ENCODE measurements at regions of chr13 and their contacts with region 1.

Region 1: DNA sequence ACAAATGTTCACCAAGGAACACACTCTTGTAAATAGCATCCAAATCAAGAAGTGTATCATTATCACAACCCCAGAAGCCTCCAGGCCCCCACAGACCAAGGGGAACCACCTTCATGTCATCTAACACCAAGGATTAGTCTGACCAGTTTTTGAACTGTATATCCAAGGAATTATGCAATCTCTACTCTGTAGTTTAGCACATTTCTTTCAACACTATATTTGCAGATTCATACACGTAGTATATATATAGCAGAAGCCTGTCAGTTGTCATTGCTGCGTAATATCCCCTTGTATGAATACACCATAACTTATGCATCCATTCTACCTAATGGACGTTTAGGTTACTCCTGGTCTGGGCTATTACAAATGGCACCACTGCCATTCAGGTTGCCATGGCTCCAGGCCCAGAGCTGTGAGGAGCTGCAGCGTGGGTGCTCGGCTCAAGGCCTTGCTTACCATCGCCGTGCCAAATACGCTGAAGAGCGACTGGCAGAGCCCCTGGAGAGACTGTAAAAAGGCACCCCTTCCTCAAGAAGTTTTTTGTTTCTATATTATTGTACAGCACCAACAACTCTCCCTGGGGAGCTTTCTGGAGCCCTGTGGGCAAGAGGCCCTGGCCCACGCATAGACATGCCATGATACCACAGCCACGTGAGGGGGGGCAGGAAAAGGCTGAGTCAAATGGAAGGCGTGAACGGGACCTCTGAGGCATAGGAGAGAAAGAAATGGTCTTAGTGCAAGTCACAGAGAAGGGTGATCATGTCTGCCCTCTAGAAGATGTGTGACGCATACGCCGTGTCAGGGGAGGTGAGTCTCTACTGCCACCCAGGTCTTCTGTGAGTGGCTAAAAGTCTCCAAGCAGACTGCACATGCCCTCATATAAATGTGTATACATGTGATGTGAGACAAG is 10.8 kb downstream of the LATS2 start:
- DNase-seq: no peak
- ATAC-seq: peak in 2 of 4 donors; percentile 31 to 33
- H3K4me3 ChIP-seq: no peak overlapping the region
- H3K27ac ChIP-seq: peak overlapping the region; percentile 81
- H3K4me1 ChIP-seq: peaks cover 71% of the 10 kb centered on the region
- H3K27me3 ChIP-seq: no peaks in the 10 kb centered on the region
- CTCF ChIP-seq: no peak

Region 2: GRCh38 chr13:20924758-20925394 is 125.7 kb before region 1 on chr13:
- intact Hi-C with region 1: no loop called
- DNase-seq: peak; percentile 65 to 79
- ATAC-seq: peak; percentile 55 to 83 (median 68)
- H3K4me3 ChIP-seq: no peak overlapping the region
- H3K27ac ChIP-seq: no peak overlapping the region
- H3K4me1 ChIP-seq: no peaks in the 10 kb centered on the region
- H3K27me3 ChIP-seq: no peaks in the 10 kb centered on the region
- CTCF ChIP-seq: peak; percentile 82

Region 3: GRCh38 chr13:20997430-20998161 is 52.9 kb before region 1 on chr13:
- intact Hi-C with region 1: loop called (anchors 5 kb)
- DNase-seq: peak in 1 of 2 donors; percentile 74
- ATAC-seq: peak in 2 of 4 donors; percentile 41 to 53
- H3K4me3 ChIP-seq: no peak overlapping the region
- H3K27ac ChIP-seq: peak overlapping the region; percentile 25
- H3K4me1 ChIP-seq: peaks cover 42% of the 10 kb centered on the region
- H3K27me3 ChIP-seq: no peaks in the 10 kb centered on the region
- CTCF ChIP-seq: no peak

Measured in psoas muscle (tissue), 8 donors.